ENCODE measurements at regions of chr5 and their contacts with region 1.

Region 1: GRCh38 chr5:172188033-172188892 is at the start of gene STK10:
- DNase-seq: peak; percentile 79 to 95 (median 86)
- ATAC-seq: peak; percentile 74
- H3K4me3 ChIP-seq: peak within 1 kb of the TSS; percentile 99
- H3K4me3 Mint-ChIP-seq: peak within 1 kb of the TSS; percentile 100
- H3K27ac ChIP-seq: peak within 1 kb of the TSS; percentile 89 to 98
- H3K27ac Mint-ChIP-seq: peak within 1 kb of the TSS; percentile 98
- H3K4me1 ChIP-seq: peaks cover 37% of the 10 kb centered on the region
- H3K4me1 Mint-ChIP-seq: peaks cover 37% of the 10 kb centered on the region
- H3K27me3 ChIP-seq: no peaks in the 10 kb centered on the region
- H3K27me3 Mint-ChIP-seq: no peaks in the 10 kb centered on the region
- CTCF ChIP-seq: peak; percentile 92
- total RNA-seq, gene STK10: 211 to 229 TPM

Region 2: GRCh38 chr5:171913987-171914273 is 274.3 kb before region 1 on chr5:
- CTCF ChIA-PET with region 1: interaction called, 6 read pairs
- POLR2A ChIA-PET with region 1: interaction called, 4 read pairs
- intact Hi-C with region 1: loop called (anchors 2 kb)
- DNase-seq: no peak
- ATAC-seq: no peak
- H3K4me3 ChIP-seq: no peak overlapping the region
- H3K4me3 Mint-ChIP-seq: no peak overlapping the region
- H3K27ac ChIP-seq: no peak overlapping the region
- H3K27ac Mint-ChIP-seq: peak overlapping the region; percentile 9
- H3K4me1 ChIP-seq: no peaks in the 10 kb centered on the region
- H3K4me1 Mint-ChIP-seq: peaks cover 45% of the 10 kb centered on the region
- H3K27me3 ChIP-seq: no peaks in the 10 kb centered on the region
- H3K27me3 Mint-ChIP-seq: no peaks in the 10 kb centered on the region
- CTCF ChIP-seq: no peak

Region 3: GRCh38 chr5:172065501-172065990 is 122.7 kb before region 1 on chr5:
- CTCF ChIA-PET with region 1: interaction called, 11 read pairs
- POLR2A ChIA-PET with region 1: interaction called, 37 read pairs
- intact Hi-C with region 1: loop called (anchors 1 to 5 kb)
- DNase-seq: peak in 1 of 14 experiments; percentile 34
- ATAC-seq: no peak
- H3K4me3 ChIP-seq: no peak overlapping the region
- H3K4me3 Mint-ChIP-seq: no peak overlapping the region
- H3K27ac ChIP-seq: peak overlapping the region; percentile 69 to 84
- H3K27ac Mint-ChIP-seq: peak overlapping the region; percentile 89
- H3K4me1 ChIP-seq: peaks cover 44% of the 10 kb centered on the region
- H3K4me1 Mint-ChIP-seq: peaks cover 76% of the 10 kb centered on the region
- H3K27me3 ChIP-seq: no peaks in the 10 kb centered on the region
- H3K27me3 Mint-ChIP-seq: no peaks in the 10 kb centered on the region
- CTCF ChIP-seq: no peak

Region 4: DNA sequence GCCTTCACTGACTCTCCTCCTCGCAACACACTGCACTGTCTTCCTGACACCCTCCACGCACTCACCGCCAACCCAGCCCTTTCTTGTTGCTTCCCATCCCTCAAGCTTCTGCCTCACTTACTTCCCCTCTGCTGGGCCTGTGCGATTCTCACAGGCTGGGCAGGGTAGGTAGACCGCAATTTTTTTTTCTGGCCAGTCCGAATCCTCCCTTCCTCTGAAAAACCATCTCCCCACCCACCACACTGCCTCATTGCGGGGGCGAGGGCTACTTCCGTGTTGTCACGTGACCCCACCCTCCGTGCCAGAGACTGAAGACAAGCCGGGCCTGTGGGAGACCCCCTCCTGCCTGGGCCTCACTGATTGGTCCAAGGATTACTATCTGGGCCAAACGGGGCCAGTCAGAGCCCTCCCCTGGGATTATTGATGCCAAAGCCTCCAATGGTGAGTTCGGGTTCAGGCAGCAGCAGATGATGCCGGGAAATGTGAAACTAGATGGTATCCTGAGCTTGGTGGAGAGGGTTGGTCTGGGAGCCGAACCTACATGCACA is 73.3 kb before region 1 on chr5:
- CTCF ChIA-PET with region 1: interaction called, 49 read pairs
- POLR2A ChIA-PET with region 1: interaction called, 54 read pairs
- intact Hi-C with region 1: loop called in 1 of 2 experiments (anchors 1 kb)
- DNase-seq: peak in 13 of 14 experiments; percentile 33 to 90 (median 51)
- ATAC-seq: peak; percentile 18
- H3K4me3 ChIP-seq: peak overlapping the region; percentile 19
- H3K4me3 Mint-ChIP-seq: peak overlapping the region; percentile 57
- H3K27ac ChIP-seq: peak overlapping the region; percentile 79 to 84
- H3K27ac Mint-ChIP-seq: peak overlapping the region; percentile 91
- H3K4me1 ChIP-seq: peaks cover 96% of the 10 kb centered on the region
- H3K4me1 Mint-ChIP-seq: peaks cover 82% of the 10 kb centered on the region
- H3K27me3 ChIP-seq: no peaks in the 10 kb centered on the region
- H3K27me3 Mint-ChIP-seq: no peaks in the 10 kb centered on the region
- CTCF ChIP-seq: no peak

Region 5: DNA sequence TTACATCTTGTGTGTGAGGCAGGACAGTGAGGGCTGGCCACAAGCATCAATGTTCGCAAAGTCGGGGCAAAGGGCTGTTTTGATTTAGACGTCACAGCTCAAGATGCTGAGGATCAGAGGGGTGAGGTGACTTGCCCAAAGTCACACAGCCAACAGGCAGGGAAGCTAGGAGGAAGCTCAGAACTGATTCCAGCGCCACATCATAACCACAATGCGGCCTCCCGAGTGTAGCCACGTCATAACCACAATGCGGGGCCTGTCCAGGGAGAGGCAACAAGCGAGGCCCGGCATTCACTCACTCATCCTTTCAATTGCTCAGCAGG is 14.5 kb before region 1 on chr5:
- CTCF ChIA-PET with region 1: interaction called, 85 read pairs
- POLR2A ChIA-PET with region 1: interaction called, 592 read pairs
- intact Hi-C with region 1: loop called (anchors 1 kb)
- DNase-seq: peak in 13 of 14 experiments; percentile 40 to 82 (median 62)
- ATAC-seq: peak; percentile 3
- H3K4me3 ChIP-seq: peak overlapping the region; percentile 65
- H3K4me3 Mint-ChIP-seq: peak overlapping the region; percentile 91
- H3K27ac ChIP-seq: peak overlapping the region; percentile 80 to 97
- H3K27ac Mint-ChIP-seq: peak overlapping the region; percentile 98
- H3K4me1 ChIP-seq: peaks cover 96% of the 10 kb centered on the region
- H3K4me1 Mint-ChIP-seq: peaks cover 95% of the 10 kb centered on the region
- H3K27me3 ChIP-seq: no peaks in the 10 kb centered on the region
- H3K27me3 Mint-ChIP-seq: no peaks in the 10 kb centered on the region
- CTCF ChIP-seq: no peak

Region 6: DNA sequence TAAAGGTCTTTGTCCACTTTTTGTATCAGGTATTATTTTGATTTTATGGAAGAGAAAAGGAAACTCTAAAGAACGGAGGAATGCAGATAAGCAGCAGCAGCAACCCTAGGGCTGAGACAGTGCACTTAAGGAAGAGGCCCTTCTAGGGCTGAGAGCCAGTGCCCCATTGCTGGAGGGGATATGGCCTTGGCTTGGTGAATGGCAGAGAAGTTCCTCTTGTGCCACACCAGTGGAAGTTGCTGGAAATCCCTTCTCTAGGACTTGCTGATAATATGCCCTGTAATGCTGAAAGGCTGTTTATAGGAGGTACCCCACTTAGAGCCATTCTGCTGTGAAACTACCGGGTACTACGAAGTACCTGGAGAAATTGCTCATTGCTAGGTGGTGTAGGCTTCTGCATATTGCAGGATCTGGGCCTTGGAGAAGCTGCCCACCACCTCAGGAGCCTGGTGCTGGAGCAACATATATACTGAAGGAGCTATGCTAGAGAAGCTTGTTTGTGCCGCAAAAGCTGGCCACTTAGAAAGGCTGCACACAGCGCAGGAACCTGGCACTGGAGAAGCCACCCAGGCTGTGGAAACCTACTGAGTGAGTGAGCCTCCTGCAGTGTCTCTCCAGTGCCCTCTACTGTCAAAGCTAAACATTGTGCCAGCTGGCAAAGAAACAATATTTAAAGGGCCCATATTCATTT is 104.9 kb after region 1 on chr5:
- CTCF ChIA-PET with region 1: interaction called, 5 read pairs
- POLR2A ChIA-PET with region 1: interaction called, 3 read pairs
- intact Hi-C with region 1: loop called in 1 of 2 experiments (anchors 2 kb)
- DNase-seq: peak; percentile 28 to 83 (median 50)
- ATAC-seq: peak; percentile 100
- H3K4me3 ChIP-seq: no peak overlapping the region
- H3K4me3 Mint-ChIP-seq: no peak overlapping the region
- H3K27ac ChIP-seq: no peak overlapping the region
- H3K27ac Mint-ChIP-seq: no peak overlapping the region
- H3K4me1 ChIP-seq: peaks cover 6% of the 10 kb centered on the region
- H3K4me1 Mint-ChIP-seq: peaks cover 4% of the 10 kb centered on the region
- H3K27me3 ChIP-seq: no peaks in the 10 kb centered on the region
- H3K27me3 Mint-ChIP-seq: no peaks in the 10 kb centered on the region
- CTCF ChIP-seq: peak; percentile 83

Region 7: DNA sequence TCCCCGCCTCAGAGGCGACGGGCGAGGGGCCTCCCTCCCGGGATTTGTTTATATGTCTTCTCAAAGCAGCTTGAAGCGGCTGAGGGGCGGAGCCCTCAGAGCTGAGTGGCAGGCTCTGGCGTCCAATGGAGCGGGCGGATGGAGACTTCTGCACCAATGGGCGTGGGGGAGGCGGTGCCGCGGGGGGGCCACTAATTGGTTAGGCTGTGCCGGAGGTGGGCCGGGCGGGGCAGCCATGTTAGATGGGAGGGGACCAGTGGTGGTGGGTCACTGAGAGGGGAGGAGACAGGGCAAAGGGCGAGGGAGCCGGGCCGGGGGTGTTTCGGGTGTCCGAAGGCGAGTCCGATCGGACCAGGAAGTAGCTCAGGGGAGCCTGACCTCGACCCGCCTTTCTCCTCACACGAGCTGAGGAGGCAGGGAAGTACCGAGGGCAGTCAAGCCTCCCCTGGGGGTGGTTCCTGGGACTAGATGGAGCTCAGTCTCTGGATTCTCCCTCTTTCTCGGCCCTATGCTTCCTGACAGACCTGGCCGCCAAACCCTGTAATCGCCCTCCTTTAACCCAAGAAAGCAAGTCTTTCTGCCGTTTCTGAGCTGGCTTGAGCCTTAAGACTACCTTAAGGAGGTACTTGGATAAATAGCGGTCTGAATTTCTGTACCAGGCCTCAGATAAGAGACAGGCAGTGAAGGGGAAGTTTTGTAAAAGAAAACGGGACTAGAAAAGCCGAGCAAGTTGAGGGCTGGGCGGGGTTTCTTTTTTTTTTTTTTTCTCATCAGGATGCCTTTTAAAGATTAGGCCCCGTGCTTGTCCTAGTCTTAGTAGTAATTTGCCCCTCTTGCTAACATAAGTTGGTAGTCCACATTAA is 869.0 kb after region 1 on chr5:
- CTCF ChIA-PET with region 1: no interaction called
- POLR2A ChIA-PET with region 1: no interaction called
- intact Hi-C with region 1: loop called in 1 of 2 experiments (anchors 10 kb)
- DNase-seq: peak; percentile 96 to 99 (median 98)
- ATAC-seq: peak; percentile 80
- H3K4me3 ChIP-seq: peak overlapping the region; percentile 69
- H3K4me3 Mint-ChIP-seq: peak overlapping the region; percentile 98
- H3K27ac ChIP-seq: peak overlapping the region; percentile 91 to 97
- H3K27ac Mint-ChIP-seq: peak overlapping the region; percentile 97
- H3K4me1 ChIP-seq: peaks cover 27% of the 10 kb centered on the region
- H3K4me1 Mint-ChIP-seq: peaks cover 70% of the 10 kb centered on the region
- H3K27me3 ChIP-seq: no peaks in the 10 kb centered on the region
- H3K27me3 Mint-ChIP-seq: no peaks in the 10 kb centered on the region
- CTCF ChIP-seq: no peak